Sigmoid colon (tissue), 7 donors: ENCODE measurements at regions of chr2 and their contacts with region 1.

Region 1: GRCh38 chr2:189661148-189661956 is at the start of gene ASNSD1:
- DNase-seq: peak; percentile 100
- H3K4me3 ChIP-seq: peak within 1 kb of the TSS; percentile 64 to 86 (median 72)
- H3K27ac ChIP-seq: peak within 1 kb of the TSS; percentile 81 to 88 (median 86)
- H3K4me1 ChIP-seq: peaks cover 0 to 33% (median 25%) of the 10 kb centered on the region in 4 donors
- H3K27me3 ChIP-seq: no peaks in the 10 kb centered on the region
- CTCF ChIP-seq: peak; percentile 91 to 100 (median 98)
- EP300 ChIP-seq: peak in 1 of 4 donors; percentile 65
- POLR2A ChIP-seq: peak; percentile 64 to 73
- total RNA-seq, gene ASNSD1: 41.5 to 56.6 (median 49.7) TPM

Region 2: DNA sequence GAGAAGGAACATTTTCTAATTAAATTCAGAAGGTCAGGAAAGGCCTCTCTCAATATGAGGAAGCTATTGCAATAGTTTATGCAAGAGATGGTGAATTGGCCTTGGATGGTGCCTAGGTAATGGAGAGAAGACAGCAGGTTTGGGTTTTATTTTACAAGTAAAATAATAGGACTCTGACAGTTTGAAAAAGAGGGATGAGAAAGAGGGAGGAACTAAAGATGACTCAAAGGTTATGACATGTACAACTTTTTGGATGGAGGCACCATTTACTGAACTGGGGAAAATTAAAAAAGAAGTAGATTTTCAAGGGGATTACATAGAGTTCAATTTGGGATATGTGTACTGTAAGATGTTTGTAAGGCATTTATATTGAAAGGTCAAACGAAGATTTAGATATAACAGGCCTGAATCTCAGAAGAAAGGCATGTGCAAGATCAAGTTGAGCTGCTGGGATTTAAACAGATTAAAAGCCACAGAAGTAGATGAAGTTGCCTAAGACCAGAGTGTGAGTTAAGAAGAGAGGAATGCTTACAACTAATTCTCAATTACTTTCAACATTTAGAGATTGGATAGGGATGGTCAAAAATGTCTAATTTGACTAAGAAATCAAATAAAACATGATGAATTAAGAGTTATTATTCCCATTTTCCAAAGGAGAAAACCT is 12.4 kb before region 1 on chr2:
- intact Hi-C with region 1: no loop called
- DNase-seq: no peak
- H3K4me3 ChIP-seq: no peak overlapping the region
- H3K27ac ChIP-seq: no peak overlapping the region
- H3K4me1 ChIP-seq: no peaks in the 10 kb centered on the region
- H3K27me3 ChIP-seq: no peaks in the 10 kb centered on the region
- CTCF ChIP-seq: no peak
- EP300 ChIP-seq: no peak
- POLR2A ChIP-seq: no peak

Region 3: GRCh38 chr2:189674374-189675112 is 13.2 kb after region 1 on chr2 and contains the start of gene ANKAR:
- intact Hi-C with region 1: loop called (anchors 1 kb)
- DNase-seq: peak; percentile 94
- H3K4me3 ChIP-seq: peak within 1 kb of the TSS; percentile 53 to 70 (median 61)
- H3K27ac ChIP-seq: peak within 1 kb of the TSS; percentile 85 to 98 (median 94)
- H3K4me1 ChIP-seq: peaks cover 0 to 29% (median 14%) of the 10 kb centered on the region in 4 donors
- H3K27me3 ChIP-seq: no peaks in the 10 kb centered on the region
- CTCF ChIP-seq: peak; percentile 44 to 91 (median 62)
- EP300 ChIP-seq: no peak
- POLR2A ChIP-seq: peak; percentile 30 to 34
- total RNA-seq, gene ANKAR: 11.9 to 27.7 (median 23.9) TPM

Region 4: GRCh38 chr2:189698020-189698887 is 36.9 kb after region 1 on chr2:
- intact Hi-C with region 1: loop called (anchors 1 kb)
- DNase-seq: no peak
- H3K4me3 ChIP-seq: no peak overlapping the region
- H3K27ac ChIP-seq: no peak overlapping the region
- H3K4me1 ChIP-seq: peaks cover 0 to 4% (median 0%) of the 10 kb centered on the region in 4 donors
- H3K27me3 ChIP-seq: no peaks in the 10 kb centered on the region
- CTCF ChIP-seq: peak; percentile 14 to 56 (median 34)
- EP300 ChIP-seq: no peak
- POLR2A ChIP-seq: no peak

Region 5: GRCh38 chr2:189762551-189763298 is 101.4 kb after region 1 on chr2 and contains the start of gene OSGEPL1:
- intact Hi-C with region 1: loop called (anchors 2 kb)
- DNase-seq: peak; percentile 96
- H3K4me3 ChIP-seq: peak within 1 kb of the TSS; percentile 64 to 74 (median 71)
- H3K27ac ChIP-seq: peak within 1 kb of the TSS; percentile 88 to 93 (median 89)
- H3K4me1 ChIP-seq: peaks cover 0 to 13% (median 9%) of the 10 kb centered on the region in 4 donors
- H3K27me3 ChIP-seq: no peaks in the 10 kb centered on the region
- CTCF ChIP-seq: peak in 2 of 4 experiments; percentile 30 to 33
- EP300 ChIP-seq: no peak
- POLR2A ChIP-seq: no peak
- total RNA-seq, gene OSGEPL1: 5.2 to 10.0 (median 6.7) TPM

Region 6: GRCh38 chr2:189783927-189784867 is 122.8 kb after region 1 on chr2 and contains the starts of genes ORMDL1 and PMS1:
- intact Hi-C with region 1: loop called (anchors 5 kb)
- DNase-seq: peak; percentile 97
- H3K4me3 ChIP-seq: peak within 1 kb of the TSS; percentile 64 to 85 (median 75)
- H3K27ac ChIP-seq: peak within 1 kb of the TSS; percentile 88 to 98 (median 94)
- H3K4me1 ChIP-seq: peaks cover 0 to 35% (median 32%) of the 10 kb centered on the region in 4 donors
- H3K27me3 ChIP-seq: no peaks in the 10 kb centered on the region
- CTCF ChIP-seq: no peak
- EP300 ChIP-seq: no peak
- POLR2A ChIP-seq: peak; percentile 74 to 75
- total RNA-seq, gene ORMDL1: 56.3 to 83.9 (median 64.0) TPM
- total RNA-seq, gene PMS1: 15.1 to 17.7 (median 17.5) TPM